ENCODE measurements at regions of chr14 and their contacts with region 1.

Region 1: GRCh38 chr14:103418481-103418818 is 33.2 kb downstream of the MARK3 start:
- DNase-seq: no peak
- H3K4me3 Mint-ChIP-seq: no peak overlapping the region
- H3K27ac Mint-ChIP-seq: peak overlapping the region; percentile 6
- H3K4me1 Mint-ChIP-seq: peaks cover 26% of the 10 kb centered on the region
- H3K27me3 Mint-ChIP-seq: no peaks in the 10 kb centered on the region

Region 2: GRCh38 chr14:103372603-103373304 is 45.7 kb before region 1 on chr14:
- intact Hi-C with region 1: no loop called
- DNase-seq: no peak
- H3K4me3 Mint-ChIP-seq: no peak overlapping the region
- H3K27ac Mint-ChIP-seq: no peak overlapping the region
- H3K4me1 Mint-ChIP-seq: peaks cover 5% of the 10 kb centered on the region
- H3K27me3 Mint-ChIP-seq: peaks cover 8% of the 10 kb centered on the region

Region 3: DNA sequence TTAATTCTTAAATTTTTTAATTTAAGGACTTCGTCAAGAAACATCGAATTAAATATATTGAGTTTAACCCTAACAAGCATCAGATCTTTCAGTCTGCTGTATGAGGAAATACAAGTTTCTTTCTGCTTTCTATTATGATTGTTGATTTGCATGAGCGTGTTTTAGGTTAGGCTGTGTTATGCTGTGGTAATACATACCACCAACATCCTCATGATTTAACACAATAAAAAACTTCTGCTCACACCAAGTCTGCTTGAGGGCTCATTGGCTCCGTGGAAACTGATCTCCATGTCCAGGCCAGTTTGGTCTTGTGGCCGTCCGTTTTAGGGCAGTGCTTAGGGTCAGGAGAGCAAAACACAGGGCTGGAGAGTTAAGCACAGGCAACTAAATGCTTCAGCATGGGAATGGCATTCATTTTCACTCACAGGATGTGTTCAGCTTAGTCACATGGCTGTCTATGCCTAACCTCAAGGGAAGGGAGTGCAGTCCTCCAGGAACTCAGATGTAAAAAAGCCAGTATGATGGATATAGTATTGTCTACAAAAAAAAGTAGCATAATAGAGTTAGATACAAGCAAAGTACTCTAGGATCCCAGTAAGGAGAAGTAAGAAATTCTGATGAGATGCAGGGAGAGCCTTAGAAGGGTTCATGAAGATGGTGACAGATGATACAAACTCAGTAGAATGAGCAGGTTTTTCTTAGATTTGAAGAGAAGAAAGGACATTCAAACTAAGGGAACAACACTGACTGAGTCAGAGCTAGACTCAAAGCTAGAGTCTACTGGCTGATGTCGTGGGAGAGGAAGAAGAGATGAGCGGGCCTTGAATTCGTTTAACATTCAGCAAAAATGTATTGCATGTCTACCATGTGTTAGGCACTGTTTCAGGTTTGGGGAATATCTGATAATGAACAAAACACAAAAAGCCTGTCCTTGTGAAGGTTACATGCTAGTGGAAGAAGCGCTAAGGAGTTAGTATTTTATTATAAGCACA is 16.9 kb before region 1 on chr14:
- intact Hi-C with region 1: loop called (anchors 2 kb)
- DNase-seq: no peak
- H3K4me3 Mint-ChIP-seq: no peak overlapping the region
- H3K27ac Mint-ChIP-seq: peak overlapping the region; percentile 90
- H3K4me1 Mint-ChIP-seq: peaks cover 45% of the 10 kb centered on the region
- H3K27me3 Mint-ChIP-seq: no peaks in the 10 kb centered on the region

Region 4: GRCh38 chr14:104322531-104323366 is 904.3 kb after region 1 on chr14:
- intact Hi-C with region 1: no loop called
- DNase-seq: no peak
- H3K4me3 Mint-ChIP-seq: no peak overlapping the region
- H3K27ac Mint-ChIP-seq: no peak overlapping the region
- H3K4me1 Mint-ChIP-seq: no peaks in the 10 kb centered on the region
- H3K27me3 Mint-ChIP-seq: no peaks in the 10 kb centered on the region

Measured in activated T-helper 2 cell treated with anti-CD3 and anti-CD28 coated beads, Interferon-gamma antibody, Interleukin-2, Interleukin-4, amounts not matched to agents 10 μg/mL and 5 μg/mL and 100 μg/mL, durations not matched to agents 14 hours and 24 hours and 36 hours (primary cell).